ENCODE measurements at regions of chr6 and their contacts with region 1.

Region 1: DNA sequence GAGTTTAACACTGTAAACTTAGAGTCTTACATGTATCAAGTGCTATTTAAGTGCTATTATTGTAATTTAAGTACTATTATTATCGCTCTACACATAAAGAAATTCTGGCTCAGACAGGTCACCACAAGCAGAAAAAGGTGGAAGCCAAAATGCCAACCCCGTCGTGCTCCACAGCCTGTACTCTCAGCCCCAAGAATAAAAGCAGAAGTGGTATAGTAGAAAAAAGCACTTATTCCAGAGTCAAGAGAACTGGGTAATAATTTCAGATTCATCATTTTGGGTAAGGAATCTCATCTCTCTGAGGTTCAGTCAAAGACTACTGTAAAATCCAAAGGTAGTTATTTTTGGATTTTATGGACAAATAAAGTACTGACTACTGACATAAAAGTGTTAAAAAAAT is 943 bp downstream of the ZUP1 start:
- DNase-seq: no peak
- H3K4me3 ChIP-seq: peak overlapping the region; percentile 56 to 92 (median 84)
- H3K27ac ChIP-seq: peak overlapping the region; percentile 64
- H3K4me1 ChIP-seq: peaks cover 17% of the 10 kb centered on the region
- H3K27me3 ChIP-seq: peaks cover 0 to 1% of the 10 kb centered on the region in 2 experiments
- CTCF ChIP-seq: no peak
- POLR2A ChIP-seq: no peak

Region 2: DNA sequence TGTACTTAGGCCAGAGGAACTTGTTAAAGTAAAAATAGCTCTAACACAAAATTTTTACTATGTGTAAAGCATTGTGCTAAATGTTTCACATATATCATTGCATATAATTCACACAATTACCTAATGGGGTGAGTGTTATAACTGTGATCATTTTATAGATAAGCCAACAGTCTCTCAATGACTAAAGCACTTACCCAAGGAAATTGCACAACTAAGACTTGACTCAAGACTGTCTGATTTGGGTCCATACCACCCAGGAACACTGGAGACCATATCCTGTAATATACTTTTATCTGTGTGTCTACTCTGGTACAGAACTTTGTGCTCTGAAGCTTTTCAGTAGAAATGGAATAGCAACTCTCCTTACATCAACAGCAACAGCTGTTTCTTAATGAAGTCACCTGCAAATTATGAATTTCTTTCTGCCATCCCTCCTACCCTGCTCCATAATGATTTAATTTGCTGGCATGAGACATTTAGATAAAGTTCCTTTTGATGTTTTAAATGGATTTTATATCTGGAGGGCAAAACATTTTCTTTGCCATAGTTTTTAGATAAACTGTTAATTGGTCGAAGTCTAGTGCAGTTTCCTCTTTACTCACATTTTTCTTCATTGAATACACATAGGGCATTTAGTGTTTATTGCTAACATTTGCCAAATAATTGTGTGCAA is 461.3 kb before region 1 on chr6:
- CTCF ChIA-PET with region 1: no interaction called
- POLR2A ChIA-PET with region 1: interaction called, 11 read pairs
- dilution Hi-C with region 1: no loop called
- intact Hi-C with region 1: no loop called
- DNase-seq: no peak
- H3K4me3 ChIP-seq: no peak overlapping the region
- H3K27ac ChIP-seq: no peak overlapping the region
- H3K4me1 ChIP-seq: no peaks in the 10 kb centered on the region
- H3K27me3 ChIP-seq: no peaks in the 10 kb centered on the region
- CTCF ChIP-seq: no peak
- POLR2A ChIP-seq: no peak

Region 3: DNA sequence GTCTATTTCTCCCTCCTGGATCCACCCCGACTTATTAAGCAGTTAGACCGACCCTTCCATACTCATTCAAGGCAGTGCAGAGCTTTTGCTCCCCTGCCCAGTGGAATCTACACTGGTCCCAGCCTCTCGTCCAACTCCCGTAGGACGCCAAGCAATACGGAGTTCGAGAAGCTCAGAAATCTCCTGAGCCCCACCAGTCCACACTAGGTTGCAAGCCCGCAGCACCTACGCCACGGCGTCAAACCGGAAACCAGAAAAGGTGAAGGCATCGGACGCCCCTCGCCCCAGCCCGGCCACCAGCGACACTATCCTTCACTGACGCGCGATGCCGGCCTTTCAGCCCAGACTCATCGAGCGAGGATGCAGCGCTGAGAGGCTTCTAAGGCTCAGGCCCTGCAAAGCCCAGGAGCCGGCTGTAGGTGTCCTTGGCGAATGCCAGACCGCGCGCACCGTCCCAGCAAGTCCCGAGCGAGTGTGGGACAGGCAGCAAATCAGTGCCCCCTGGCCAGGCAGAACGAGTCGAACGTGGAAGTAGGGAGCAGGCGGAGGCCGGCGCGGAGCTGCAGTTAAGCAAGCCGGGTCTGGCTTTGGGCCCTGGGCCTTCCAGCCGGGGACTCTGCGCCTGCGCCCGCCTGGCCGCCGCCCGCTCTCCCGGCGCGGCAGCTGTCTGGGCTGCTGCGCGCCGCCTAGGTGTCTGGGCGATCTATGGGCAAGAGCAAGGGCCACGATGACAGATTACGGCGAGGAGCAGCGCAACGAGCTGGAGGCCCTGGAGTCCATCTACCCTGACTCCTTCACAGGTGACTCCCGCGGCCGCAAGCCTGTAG is 96.6 kb before region 1 on chr6 and contains the start of gene RWDD1:
- CTCF ChIA-PET with region 1: no interaction called
- POLR2A ChIA-PET with region 1: no interaction called
- dilution Hi-C with region 1: no loop called
- intact Hi-C with region 1: loop called (anchors 1 kb)
- DNase-seq: peak; percentile 99
- H3K4me3 ChIP-seq: peak within 1 kb of the TSS; percentile 87 to 98 (median 98)
- H3K27ac ChIP-seq: peak within 1 kb of the TSS; percentile 84
- H3K4me1 ChIP-seq: peaks cover 33% of the 10 kb centered on the region
- H3K27me3 ChIP-seq: no peaks in the 10 kb centered on the region
- CTCF ChIP-seq: no peak
- POLR2A ChIP-seq: peak; percentile 89
- total RNA-seq, gene RWDD1: 37.9 and 44.2 TPM in 2 replicates

Region 4: GRCh38 chr6:116680975-116681808 is 13.6 kb after region 1 on chr6 and contains the start of gene KPNA5:
- CTCF ChIA-PET with region 1: no interaction called
- POLR2A ChIA-PET with region 1: interaction called, 3 read pairs
- dilution Hi-C with region 1: no loop called
- intact Hi-C with region 1: loop called (anchors 1 kb)
- DNase-seq: peak; percentile 94
- H3K4me3 ChIP-seq: peak within 1 kb of the TSS; percentile 61 to 85 (median 80)
- H3K27ac ChIP-seq: peak within 1 kb of the TSS; percentile 73
- H3K4me1 ChIP-seq: peaks cover 12% of the 10 kb centered on the region
- H3K27me3 ChIP-seq: no peaks in the 10 kb centered on the region
- CTCF ChIP-seq: no peak
- POLR2A ChIP-seq: peak; percentile 58
- total RNA-seq, gene KPNA5: 7.1 and 8.9 TPM in 2 replicates

Region 5: DNA sequence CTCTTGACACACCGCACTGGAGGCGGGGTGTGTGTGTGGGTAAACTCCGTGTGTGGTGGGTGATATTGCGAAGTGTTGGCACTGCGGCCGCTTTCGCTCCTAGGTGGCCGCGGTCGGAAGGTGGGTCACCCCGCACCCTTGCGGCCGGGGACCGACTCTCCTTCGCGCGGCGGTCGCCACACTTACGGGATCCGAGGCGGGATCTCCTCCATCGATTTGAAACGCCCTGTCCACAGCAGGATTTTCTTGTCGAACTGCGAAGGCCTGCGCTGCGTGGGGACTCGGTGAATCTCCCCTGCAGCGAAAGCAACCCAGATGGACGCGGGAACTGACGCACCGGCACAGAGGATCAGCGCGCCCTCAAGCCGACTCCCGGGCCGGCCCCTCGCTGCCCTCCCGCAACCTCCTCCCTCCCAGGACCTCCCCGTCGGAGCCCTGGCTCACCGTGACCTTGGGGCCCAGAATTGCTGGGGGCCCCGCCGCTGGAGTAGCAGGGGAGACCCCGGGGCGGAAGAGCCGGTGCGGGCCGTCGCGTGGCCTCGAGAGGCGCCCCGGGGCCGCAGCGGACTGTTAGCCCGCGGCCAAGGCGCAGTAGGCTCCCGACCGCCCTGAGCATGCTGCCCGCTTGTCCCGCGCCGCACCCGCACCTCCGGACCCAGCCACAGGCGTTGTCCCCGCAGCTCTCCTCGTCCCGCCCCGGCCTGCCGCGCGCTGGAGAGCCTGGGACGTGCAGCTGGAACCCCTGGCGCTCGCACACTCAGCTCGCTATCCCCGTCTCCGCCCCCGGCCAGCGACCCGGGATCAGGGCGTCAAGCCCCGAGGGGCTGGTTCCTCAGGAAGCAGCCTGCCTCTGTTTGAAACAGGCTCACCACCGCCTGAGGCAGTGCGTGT is 97.6 kb after region 1 on chr6 and contains the start of gene FAM162B:
- CTCF ChIA-PET with region 1: no interaction called
- POLR2A ChIA-PET with region 1: no interaction called
- dilution Hi-C with region 1: no loop called
- intact Hi-C with region 1: loop called (anchors 1 kb)
- DNase-seq: peak; percentile 36
- H3K4me3 ChIP-seq: peak within 1 kb of the TSS; percentile 42 to 60 (median 43)
- H3K27ac ChIP-seq: no peak within 1 kb of the TSS
- H3K4me1 ChIP-seq: peaks cover 7% of the 10 kb centered on the region
- H3K27me3 ChIP-seq: peaks cover 12 to 15% of the 10 kb centered on the region in 2 experiments
- CTCF ChIP-seq: no peak
- POLR2A ChIP-seq: no peak
- total RNA-seq, gene FAM162B: not detected in 2 replicates

Region 6: GRCh38 chr6:117200067-117200466 is 532.4 kb after region 1 on chr6:
- CTCF ChIA-PET with region 1: no interaction called
- POLR2A ChIA-PET with region 1: no interaction called
- dilution Hi-C with region 1: no loop called
- intact Hi-C with region 1: no loop called
- DNase-seq: no peak
- H3K4me3 ChIP-seq: no peak overlapping the region
- H3K27ac ChIP-seq: no peak overlapping the region
- H3K4me1 ChIP-seq: no peaks in the 10 kb centered on the region
- H3K27me3 ChIP-seq: no peaks in the 10 kb centered on the region
- CTCF ChIP-seq: no peak
- POLR2A ChIP-seq: no peak